ENCODE measurements at regions of chr15 and their contacts with region 1.

Region 1: GRCh38 chr15:77858792-77859490 is 218.6 kb downstream of the TBC1D2B start:
- DNase-seq: no peak
- H3K4me3 ChIP-seq: no peak overlapping the region
- CTCF ChIP-seq: no peak

Region 2: DNA sequence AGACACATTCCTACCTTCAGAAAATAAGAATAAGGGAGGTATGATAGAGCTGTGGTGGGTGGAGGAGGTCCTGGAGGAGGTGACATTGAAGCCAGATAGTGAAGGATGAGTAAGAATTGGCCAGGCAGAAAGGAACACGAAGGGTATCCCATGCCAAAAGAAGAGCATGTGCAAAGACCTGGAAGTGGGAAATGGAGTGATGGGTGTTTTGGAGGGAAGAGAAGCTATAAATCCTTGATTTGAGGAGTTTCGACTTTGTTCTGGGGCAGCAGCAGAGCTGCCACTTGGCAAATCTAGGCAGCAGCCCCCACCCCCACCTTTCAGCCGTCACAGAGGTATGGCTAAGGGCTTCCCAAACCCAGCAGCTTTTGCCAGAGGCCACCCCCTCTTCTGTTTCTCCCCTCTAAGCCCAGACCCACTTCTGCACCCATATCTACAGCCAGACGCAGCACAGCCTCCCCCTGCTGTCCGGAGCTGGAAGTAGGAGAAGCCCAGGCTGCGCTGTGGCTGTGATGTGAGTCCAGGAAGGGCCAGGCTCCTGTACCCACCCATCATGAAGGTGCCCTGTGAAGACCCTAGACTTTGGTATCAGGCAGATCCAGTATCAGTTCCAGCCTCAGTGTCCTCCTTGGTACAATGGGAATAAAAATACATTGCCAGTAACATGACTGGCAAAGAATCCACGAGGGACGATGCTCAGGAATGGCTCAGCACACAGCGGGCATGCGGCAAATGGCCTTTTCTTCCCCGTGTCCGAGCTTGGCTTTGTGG is 37.6 kb before region 1 on chr15:
- in situ Hi-C with region 1: loop called (anchors 5 kb)
- DNase-seq: peak; percentile 31
- H3K4me3 ChIP-seq: no peak overlapping the region
- CTCF ChIP-seq: peak; percentile 94